ENCODE measurements at regions of chr7 and their contacts with region 1.

Region 1: DNA sequence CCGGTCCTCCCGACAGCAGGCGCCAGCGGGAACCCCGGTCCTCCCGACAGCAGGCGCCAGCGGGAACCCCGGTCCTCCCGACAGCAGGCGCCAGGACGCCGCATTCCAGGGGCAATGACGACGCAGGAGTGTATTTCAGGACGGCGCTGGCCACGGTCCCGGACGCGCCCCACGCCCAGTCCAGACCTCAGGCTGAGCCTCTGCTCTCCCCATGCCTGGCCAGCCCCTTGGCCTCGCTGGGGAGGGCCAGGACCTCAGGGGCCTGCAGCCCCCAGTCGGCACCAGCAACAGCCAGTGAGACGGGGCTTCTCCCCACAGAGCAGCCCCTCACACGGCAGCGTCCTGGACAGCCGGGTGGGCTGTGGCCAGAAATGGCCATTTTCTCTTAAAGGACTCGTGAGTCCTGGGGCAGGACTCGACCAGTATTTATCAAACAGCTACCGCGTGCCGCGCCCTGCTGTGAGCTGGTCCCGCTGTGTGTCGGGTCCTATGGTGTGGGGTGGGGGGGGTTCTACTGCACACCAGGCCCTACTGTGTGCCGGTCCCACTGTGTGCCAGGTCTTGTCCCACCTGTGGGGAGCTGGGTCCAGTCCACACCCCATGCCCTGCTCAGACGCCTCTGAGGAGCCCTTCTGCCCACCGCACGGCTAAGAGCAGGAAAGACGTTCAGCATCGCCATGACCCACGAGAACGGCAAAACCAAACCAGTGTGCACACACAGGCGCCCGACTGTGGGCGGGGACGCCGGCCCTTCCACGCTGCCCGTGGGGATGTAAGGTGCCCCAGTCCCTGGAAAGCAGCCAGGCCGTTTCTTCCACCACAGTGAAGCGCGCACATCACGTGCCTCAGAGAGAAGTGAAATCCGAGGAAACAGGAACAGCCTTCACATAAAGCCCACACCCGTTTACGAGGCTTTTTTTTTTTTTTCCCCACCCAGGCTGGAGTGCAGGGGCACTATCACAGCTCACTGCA is 33.3 kb downstream of the GET4 start:
- DNase-seq: peak; percentile 82
- H3K4me3 ChIP-seq: peak overlapping the region in 1 of 2 experiments; percentile 37; a peak in 2 of 4 replicates
- H3K27ac ChIP-seq: no peak overlapping the region
- H3K4me1 ChIP-seq: peaks cover 4% of the 10 kb centered on the region in 2 experiments; a peak in 3 of 4 replicates
- H3K27me3 ChIP-seq: no peaks in the 10 kb centered on the region
- CTCF ChIP-seq: no peak
- EP300 ChIP-seq: no peak
- RAD21 ChIP-seq: no peak

Region 2: DNA sequence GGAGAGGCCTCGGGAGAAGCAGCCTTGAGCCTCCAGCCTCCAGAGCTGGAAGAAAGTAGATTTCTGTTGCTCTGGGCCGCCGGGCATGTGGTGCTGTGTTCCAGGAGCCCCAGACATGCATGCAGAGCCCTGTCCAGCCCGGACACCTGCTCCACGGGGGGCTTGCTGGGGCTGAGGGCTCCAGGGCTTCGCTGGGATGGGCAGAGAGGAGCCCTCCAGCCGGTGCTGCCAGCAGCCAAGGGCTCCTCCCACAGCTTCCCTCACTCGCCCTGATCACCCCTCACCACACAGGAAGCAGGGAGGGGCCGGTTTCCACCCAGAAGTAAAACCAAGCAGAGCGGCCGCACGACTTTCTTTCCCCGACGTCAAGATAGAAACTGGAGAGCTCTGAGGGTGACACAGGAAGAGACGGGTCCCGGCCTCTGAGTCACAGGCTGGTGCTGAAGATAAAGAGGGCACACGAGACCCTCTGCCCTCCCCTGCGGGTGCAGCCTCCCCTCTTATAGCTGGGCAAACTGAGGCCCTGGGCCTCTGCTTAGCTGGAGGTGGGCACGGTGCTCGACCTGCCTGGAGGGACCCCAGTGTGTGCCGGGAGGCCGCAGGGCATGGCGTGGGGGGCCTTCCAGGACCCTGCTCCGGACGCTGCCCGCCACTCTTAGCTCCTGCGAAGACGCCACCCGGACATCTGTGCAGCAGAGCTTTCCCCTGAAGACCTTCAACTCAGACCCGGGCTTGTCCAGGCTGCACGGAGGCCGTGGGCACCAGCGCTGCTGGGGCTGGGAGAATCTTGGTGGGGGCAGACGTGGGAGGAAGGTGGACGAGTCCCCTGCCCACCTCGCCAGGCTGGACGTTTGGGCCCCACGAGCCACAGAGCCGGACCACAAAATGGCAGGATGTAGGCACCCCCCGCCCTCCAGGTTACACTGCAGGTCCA is 13.7 kb after region 1 on chr7:
- CTCF ChIA-PET with region 1: interaction called, 28 read pairs
- POLR2A ChIA-PET with region 1: no interaction called
- DNase-seq: no peak
- H3K4me3 ChIP-seq: no peak overlapping the region
- H3K27ac ChIP-seq: no peak overlapping the region
- H3K4me1 ChIP-seq: peaks cover 0 to 5% of the 10 kb centered on the region in 2 experiments; a peak in 1 of 4 replicates
- H3K27me3 ChIP-seq: no peaks in the 10 kb centered on the region
- CTCF ChIP-seq: no peak
- EP300 ChIP-seq: no peak
- RAD21 ChIP-seq: no peak

Region 3: GRCh38 chr7:954330-955238 is 44.9 kb after region 1 on chr7 and contains the start of gene ADAP1:
- CTCF ChIA-PET with region 1: interaction called, 99 read pairs
- POLR2A ChIA-PET with region 1: interaction called, 6 read pairs
- DNase-seq: peak; percentile 92
- H3K4me3 ChIP-seq: peak within 1 kb of the TSS; percentile 42 to 59
- H3K27ac ChIP-seq: no peak within 1 kb of the TSS
- H3K4me1 ChIP-seq: peaks cover 0 to 4% of the 10 kb centered on the region in 2 experiments; a peak in 1 of 4 replicates
- H3K27me3 ChIP-seq: peaks cover 11% of the 10 kb centered on the region; the same call in 1 of the 2 replicates
- CTCF ChIP-seq: peak; percentile 11; the same call in 1 of the 2 replicates
- EP300 ChIP-seq: no peak
- RAD21 ChIP-seq: peak; percentile 45
- polyA plus RNA-seq, gene ADAP1: 3.2 and 5.4 TPM in 2 replicates

Region 4: GRCh38 chr7:964401-965231 is 55.0 kb after region 1 on chr7:
- CTCF ChIA-PET with region 1: interaction called, 99 read pairs
- POLR2A ChIA-PET with region 1: no interaction called
- DNase-seq: peak; percentile 89
- H3K4me3 ChIP-seq: no peak overlapping the region
- H3K27ac ChIP-seq: peak overlapping the region in 1 of 2 experiments; percentile 39; a peak in 2 of 4 replicates
- H3K4me1 ChIP-seq: peaks cover 4 to 24% of the 10 kb centered on the region in 2 experiments; a peak in 2 of 4 replicates
- H3K27me3 ChIP-seq: no peaks in the 10 kb centered on the region
- CTCF ChIP-seq: peak; percentile 50
- EP300 ChIP-seq: peak in 1 of 2 experiments; percentile 80; a peak in 2 of 4 replicates
- RAD21 ChIP-seq: peak; percentile 60

Region 5: GRCh38 chr7:974820-975681 is 65.4 kb after region 1 on chr7 and contains the start of gene COX19:
- CTCF ChIA-PET with region 1: interaction called, 18 read pairs
- POLR2A ChIA-PET with region 1: no interaction called
- DNase-seq: peak; percentile 100
- H3K4me3 ChIP-seq: peak within 1 kb of the TSS; percentile 75 to 83
- H3K27ac ChIP-seq: peak within 1 kb of the TSS; percentile 79 to 91
- H3K4me1 ChIP-seq: peaks cover 6 to 12% of the 10 kb centered on the region in 2 experiments; a peak in 2 of 4 replicates
- H3K27me3 ChIP-seq: no peaks in the 10 kb centered on the region
- CTCF ChIP-seq: no peak
- EP300 ChIP-seq: no peak
- RAD21 ChIP-seq: no peak
- polyA plus RNA-seq, gene COX19: 7.6 TPM in 2 replicates

Region 6: GRCh38 chr7:1012004-1012715 is 102.5 kb after region 1 on chr7:
- CTCF ChIA-PET with region 1: no interaction called
- POLR2A ChIA-PET with region 1: no interaction called
- DNase-seq: no peak
- H3K4me3 ChIP-seq: no peak overlapping the region
- H3K27ac ChIP-seq: no peak overlapping the region
- H3K4me1 ChIP-seq: peaks cover 0 to 3% of the 10 kb centered on the region in 2 experiments; a peak in 1 of 4 replicates
- H3K27me3 ChIP-seq: no peaks in the 10 kb centered on the region
- CTCF ChIP-seq: no peak
- EP300 ChIP-seq: no peak
- RAD21 ChIP-seq: no peak

Region 7: DNA sequence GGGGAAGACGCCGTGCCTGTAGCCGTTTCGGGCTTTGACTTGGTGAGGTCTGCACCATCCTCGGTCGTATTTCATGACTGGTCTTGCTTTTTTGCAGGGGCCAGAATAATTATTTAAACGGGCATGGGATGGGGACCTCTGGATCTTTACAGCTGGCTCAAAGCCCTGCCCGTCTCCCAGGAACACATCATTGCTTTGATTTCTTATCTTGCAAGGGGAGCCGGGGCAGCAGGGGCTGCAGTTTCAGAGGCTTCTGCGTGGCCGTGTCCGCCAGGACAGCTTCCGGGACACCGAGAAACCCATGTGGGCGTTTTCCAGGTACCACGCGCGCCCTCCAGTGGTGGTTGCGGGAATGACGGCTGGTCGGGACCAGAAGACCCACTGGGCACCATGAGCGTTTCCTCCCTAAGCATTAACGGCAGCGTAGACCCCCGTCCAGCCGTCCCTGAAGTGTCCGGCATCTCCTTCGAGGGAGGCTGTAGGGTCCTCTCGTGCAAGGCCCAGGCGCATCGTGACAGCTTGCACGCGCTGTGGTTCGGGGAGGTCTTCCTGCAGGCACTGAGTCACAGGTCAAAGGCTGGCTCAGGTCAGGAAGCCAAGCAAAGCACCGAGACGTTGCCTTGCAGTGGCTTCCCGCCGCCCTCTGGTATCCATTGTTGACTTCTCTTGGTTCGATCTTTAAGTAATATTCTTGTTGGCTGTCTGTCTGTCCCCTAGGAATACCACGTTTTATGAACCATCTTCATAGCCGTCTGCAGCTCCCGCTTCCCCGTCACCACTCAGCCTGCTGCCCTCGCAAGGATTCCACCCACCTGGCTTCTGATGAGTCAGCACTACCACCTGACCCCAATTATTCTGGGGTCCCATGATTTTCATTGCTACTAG is 266.6 kb after region 1 on chr7:
- CTCF ChIA-PET with region 1: interaction called, 32 read pairs
- POLR2A ChIA-PET with region 1: no interaction called
- DNase-seq: peak; percentile 93
- H3K4me3 ChIP-seq: peak overlapping the region; percentile 4 to 36; a peak in 2 of 4 replicates
- H3K27ac ChIP-seq: no peak overlapping the region
- H3K4me1 ChIP-seq: peaks cover 0 to 2% of the 10 kb centered on the region in 2 experiments; a peak in 1 of 4 replicates
- H3K27me3 ChIP-seq: no peaks in the 10 kb centered on the region
- CTCF ChIP-seq: peak; percentile 91
- EP300 ChIP-seq: no peak
- RAD21 ChIP-seq: peak; percentile 74

Measured in SK-N-SH (cell line).